Psoas muscle (tissue), 8 donors: ENCODE measurements at regions of chr1 and their contacts with region 1.

Region 1: GRCh38 chr1:22275721-22276395 is 133.0 kb upstream of the WNT4 start:
- DNase-seq: peak; percentile 40 to 65
- ATAC-seq: peak; percentile 79 to 88 (median 80)
- H3K4me3 ChIP-seq: no peak overlapping the region
- H3K27ac ChIP-seq: no peak overlapping the region
- H3K4me1 ChIP-seq: no peaks in the 10 kb centered on the region
- H3K27me3 ChIP-seq: peaks cover 0 to 4% (median 0%) of the 10 kb centered on the region in 3 donors
- CTCF ChIP-seq: peak; percentile 79

Region 2: GRCh38 chr1:22001409-22001808 is 274.4 kb before region 1 on chr1 and contains the start of gene CELA3A:
- intact Hi-C with region 1: no loop called
- DNase-seq: no peak
- ATAC-seq: no peak
- H3K4me3 ChIP-seq: no peak within 1 kb of the TSS
- H3K27ac ChIP-seq: no peak within 1 kb of the TSS
- H3K4me1 ChIP-seq: no peaks in the 10 kb centered on the region
- H3K27me3 ChIP-seq: no peaks in the 10 kb centered on the region
- CTCF ChIP-seq: no peak
- total RNA-seq, gene CELA3A: 0.65 to 4.0 TPM in 2 of 4 donors, not detected in the others

Region 3: GRCh38 chr1:22096036-22096435 is 179.8 kb before region 1 on chr1:
- intact Hi-C with region 1: no loop called
- DNase-seq: no peak
- ATAC-seq: no peak
- H3K4me3 ChIP-seq: no peak overlapping the region
- H3K27ac ChIP-seq: no peak overlapping the region
- H3K4me1 ChIP-seq: peaks cover 13% of the 10 kb centered on the region
- H3K27me3 ChIP-seq: no peaks in the 10 kb centered on the region
- CTCF ChIP-seq: no peak

Region 4: DNA sequence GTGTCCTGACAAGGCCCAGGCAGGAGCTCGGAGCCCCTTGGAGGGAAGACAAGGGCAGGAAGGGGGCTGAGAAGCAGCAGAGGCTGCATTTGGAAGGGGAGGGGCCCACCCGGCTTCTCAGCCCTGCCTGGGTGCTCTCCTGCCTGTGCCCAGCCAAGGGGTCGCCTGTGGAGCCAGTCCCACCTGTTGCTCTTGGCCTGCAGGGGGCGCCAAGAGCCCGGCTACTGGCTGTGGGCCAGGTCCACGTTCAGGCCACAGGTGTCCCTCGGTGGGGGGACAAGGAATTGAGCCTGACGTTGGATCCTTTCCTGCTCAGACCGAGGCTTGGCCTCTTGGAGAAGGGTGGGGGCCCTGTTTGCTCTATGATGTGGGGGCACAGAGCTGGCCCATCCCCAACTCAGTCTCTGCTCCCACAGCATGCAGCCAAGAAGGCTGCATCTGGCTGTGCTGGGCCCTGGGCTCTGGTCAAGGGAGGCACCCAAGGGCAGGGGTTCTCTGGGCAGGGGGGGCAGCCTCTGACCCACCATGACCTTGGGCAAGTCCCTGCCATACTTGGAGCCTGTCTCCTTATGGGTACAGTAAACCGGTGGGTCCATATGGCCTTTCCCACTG is 143.9 kb before region 1 on chr1:
- intact Hi-C with region 1: loop called (anchors 5 to 10 kb)
- DNase-seq: peak; percentile 35 to 67
- ATAC-seq: peak; percentile 35 to 60 (median 47)
- H3K4me3 ChIP-seq: no peak overlapping the region
- H3K27ac ChIP-seq: peak overlapping the region; percentile 83
- H3K4me1 ChIP-seq: peaks cover 26% of the 10 kb centered on the region
- H3K27me3 ChIP-seq: no peaks in the 10 kb centered on the region
- CTCF ChIP-seq: peak; percentile 69